Prostate gland (tissue), 2 donors: ENCODE measurements at regions of chr1 and their contacts with region 1.

Region 1: GRCh38 chr1:32496127-32496526 is 31.3 kb downstream of the ZBTB8B start:
- DNase-seq: peak; percentile 19
- H3K4me3 ChIP-seq: no peak overlapping the region
- H3K27ac ChIP-seq: peak overlapping the region; percentile 35 to 59
- H3K4me1 ChIP-seq: peaks cover 6% of the 10 kb centered on the region
- H3K27me3 ChIP-seq: no peaks in the 10 kb centered on the region
- CTCF ChIP-seq: no peak
- POLR2A ChIP-seq: no peak

Region 2: GRCh38 chr1:32538887-32539583 is 42.9 kb after region 1 on chr1 and contains the start of gene ZBTB8A:
- intact Hi-C with region 1: loop called (anchors 5 kb)
- DNase-seq: peak; percentile 23
- H3K4me3 ChIP-seq: peak within 1 kb of the TSS; percentile 50 to 55
- H3K27ac ChIP-seq: peak within 1 kb of the TSS; percentile 76 to 78
- H3K4me1 ChIP-seq: no peaks in the 10 kb centered on the region
- H3K27me3 ChIP-seq: no peaks in the 10 kb centered on the region
- CTCF ChIP-seq: peak in 1 of 4 experiments; percentile 9
- POLR2A ChIP-seq: no peak
- total RNA-seq, gene ZBTB8A: 5.9 to 7.4 TPM